Right cardiac atrium (tissue), 5 donors: ENCODE measurements at regions of chr17 and their contacts with region 1.

Region 1: GRCh38 chr17:2847381-2848333 is 51.4 kb downstream of the RAP1GAP2 start:
- DNase-seq: peak in 1 of 3 donors; percentile 25
- ATAC-seq: peak in 1 of 2 donors; percentile 17
- H3K4me3 ChIP-seq: no peak overlapping the region
- H3K27ac ChIP-seq: no peak overlapping the region
- H3K4me1 ChIP-seq: no peaks in the 10 kb centered on the region
- H3K27me3 ChIP-seq: no peaks in the 10 kb centered on the region

Region 2: DNA sequence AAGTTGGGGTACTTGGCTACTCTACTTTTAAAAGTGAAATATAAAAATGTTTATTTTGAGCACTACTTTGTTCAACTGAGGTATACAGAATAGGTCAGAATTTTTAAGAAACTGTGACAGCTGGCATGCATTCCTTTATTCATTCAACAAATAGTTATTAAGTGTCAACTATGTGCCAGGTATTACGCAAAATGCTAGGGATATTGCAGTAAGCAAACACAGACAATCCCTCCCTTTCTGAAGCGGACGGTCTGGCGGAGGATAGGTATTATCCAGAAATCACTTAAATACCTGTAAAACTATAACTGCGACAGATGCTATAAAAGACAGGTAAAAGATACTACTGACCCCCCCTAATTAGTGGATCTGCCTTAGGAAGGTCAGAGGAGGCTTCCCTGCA is 362.1 kb before region 1 on chr17:
- intact Hi-C with region 1: no loop called
- DNase-seq: no peak
- ATAC-seq: no peak
- H3K4me3 ChIP-seq: no peak overlapping the region
- H3K27ac ChIP-seq: no peak overlapping the region
- H3K4me1 ChIP-seq: no peaks in the 10 kb centered on the region
- H3K27me3 ChIP-seq: no peaks in the 10 kb centered on the region

Region 3: DNA sequence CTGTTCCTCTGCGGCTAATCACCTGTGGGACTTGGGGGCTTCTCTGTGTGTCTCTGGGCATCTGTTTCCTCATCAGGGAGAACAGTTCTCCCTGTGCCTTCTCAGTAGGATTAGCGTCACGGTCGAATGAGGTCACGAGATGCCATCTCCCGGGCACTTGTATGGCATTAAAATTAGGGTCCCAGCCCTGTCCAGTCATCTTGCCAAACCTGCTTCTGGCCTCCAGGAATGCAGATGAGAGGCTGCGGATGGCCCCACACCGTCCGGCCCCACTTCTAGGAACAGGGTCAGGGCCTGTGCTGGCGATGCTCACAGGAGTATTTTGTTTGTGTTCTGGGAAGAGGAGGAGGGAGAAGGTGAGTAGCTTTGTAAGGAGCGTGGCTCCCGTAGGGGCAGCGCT is 157.3 kb after region 1 on chr17:
- intact Hi-C with region 1: loop called in 2 of 4 experiments (anchors 2 to 5 kb)
- DNase-seq: no peak
- ATAC-seq: peak in 1 of 2 donors; percentile 26
- H3K4me3 ChIP-seq: no peak overlapping the region
- H3K27ac ChIP-seq: no peak overlapping the region
- H3K4me1 ChIP-seq: peaks cover 14% of the 10 kb centered on the region
- H3K27me3 ChIP-seq: no peaks in the 10 kb centered on the region